ENCODE measurements at regions of chr5 and their contacts with region 1.

Region 1: DNA sequence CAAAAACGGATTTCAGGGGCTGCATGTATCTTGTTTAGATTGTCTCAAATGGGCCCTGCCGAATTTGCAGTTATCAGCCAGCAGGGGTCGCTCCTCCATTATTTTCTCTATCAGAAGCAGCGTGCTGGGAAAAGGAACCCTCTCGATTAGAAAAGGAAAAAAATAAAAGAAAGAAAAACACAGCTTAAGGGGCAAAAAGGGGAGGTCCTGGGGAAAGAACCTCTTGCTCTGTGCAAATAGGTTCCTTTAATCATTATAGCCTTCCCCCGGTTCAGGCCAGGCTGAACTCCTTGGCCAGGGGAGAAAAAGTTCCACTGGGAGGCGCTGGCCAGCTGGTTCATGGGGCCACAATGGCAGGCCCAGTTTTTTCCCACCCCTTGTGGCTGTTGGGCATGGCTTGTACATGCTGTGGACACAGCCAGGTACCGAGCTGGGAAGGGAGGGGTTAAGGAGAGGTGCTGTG is 25.0 kb upstream of the CAPSL start:
- DNase-seq: peak in 1 of 2 experiments; percentile 75
- H3K4me3 ChIP-seq: no peak overlapping the region
- H3K27ac ChIP-seq: no peak overlapping the region
- H3K4me1 ChIP-seq: no peaks in the 10 kb centered on the region
- H3K27me3 ChIP-seq: no peaks in the 10 kb centered on the region
- CTCF ChIP-seq: peak; percentile 40 to 69 (median 42)
- EP300 ChIP-seq: no peak
- POLR2A ChIP-seq: no peak
- RAD21 ChIP-seq: peak; percentile 23 to 43; a peak in 3 of 4 replicates

Region 2: DNA sequence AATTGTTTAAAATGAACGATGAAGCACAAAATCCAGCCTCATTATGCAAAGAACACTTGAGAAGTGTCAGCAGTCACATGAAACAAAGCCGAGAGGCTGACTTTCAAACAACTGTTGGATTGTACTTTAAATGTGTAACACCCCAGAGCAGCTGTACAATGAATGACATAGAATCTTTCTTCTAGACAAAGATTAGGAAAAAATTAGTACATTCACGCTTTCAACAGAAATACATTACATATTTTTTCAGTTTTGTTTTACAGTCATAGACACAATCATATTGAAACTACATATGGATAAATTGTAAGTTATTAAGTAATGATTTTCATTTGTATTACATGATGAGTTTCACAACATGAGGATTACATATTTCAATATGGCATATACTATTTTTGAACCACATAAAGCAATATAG is 905.0 kb before region 1 on chr5:
- CTCF ChIA-PET with region 1: no interaction called
- POLR2A ChIA-PET with region 1: no interaction called
- DNase-seq: no peak
- H3K4me3 ChIP-seq: no peak overlapping the region
- H3K27ac ChIP-seq: no peak overlapping the region
- H3K4me1 ChIP-seq: peaks cover 0 to 3% (median 0%) of the 10 kb centered on the region in 4 experiments; a peak in 1 of 7 replicates
- H3K27me3 ChIP-seq: no peaks in the 10 kb centered on the region
- CTCF ChIP-seq: no peak
- EP300 ChIP-seq: no peak
- POLR2A ChIP-seq: no peak
- RAD21 ChIP-seq: no peak

Region 3: GRCh38 chr5:36040651-36041537 is 77.5 kb after region 1 on chr5:
- CTCF ChIA-PET with region 1: interaction called, 10 read pairs
- POLR2A ChIA-PET with region 1: no interaction called
- DNase-seq: no peak
- H3K4me3 ChIP-seq: no peak overlapping the region
- H3K27ac ChIP-seq: no peak overlapping the region
- H3K4me1 ChIP-seq: peaks cover 0 to 6% (median 1%) of the 10 kb centered on the region in 4 experiments; a peak in 3 of 7 replicates
- H3K27me3 ChIP-seq: no peaks in the 10 kb centered on the region
- CTCF ChIP-seq: no peak
- EP300 ChIP-seq: no peak
- POLR2A ChIP-seq: no peak
- RAD21 ChIP-seq: no peak

Region 4: GRCh38 chr5:36355513-36355912 is 392.1 kb after region 1 on chr5:
- CTCF ChIA-PET with region 1: no interaction called
- POLR2A ChIA-PET with region 1: no interaction called
- DNase-seq: no peak
- H3K4me3 ChIP-seq: no peak overlapping the region
- H3K27ac ChIP-seq: no peak overlapping the region
- H3K4me1 ChIP-seq: no peaks in the 10 kb centered on the region
- H3K27me3 ChIP-seq: no peaks in the 10 kb centered on the region
- CTCF ChIP-seq: no peak
- EP300 ChIP-seq: no peak
- POLR2A ChIP-seq: no peak
- RAD21 ChIP-seq: no peak